Mucosa of descending colon (tissue), 3 donors: ENCODE measurements at regions of chr7 and their contacts with region 1.

Region 1: GRCh38 chr7:83410989-83411591 is 237.8 kb downstream of the SEMA3E start:
- DNase-seq: peak in 1 of 3 donors; percentile 34
- ATAC-seq: no peak
- H3K4me3 ChIP-seq: no peak overlapping the region
- H3K4me1 ChIP-seq: no peaks in the 10 kb centered on the region
- CTCF ChIP-seq: no peak

Region 2: GRCh38 chr7:83655951-83656556 is 245.0 kb after region 1 on chr7:
- intact Hi-C with region 1: loop called in 1 of 2 experiments (anchors 2 kb)
- DNase-seq: peak in 1 of 3 donors; percentile 63
- ATAC-seq: peak; percentile 57
- H3K4me3 ChIP-seq: no peak overlapping the region
- H3K4me1 ChIP-seq: no peaks in the 10 kb centered on the region
- CTCF ChIP-seq: peak; percentile 44